Right ventricle myocardium inferior (tissue), 1 donor: ENCODE measurements at regions of chr17 and their contacts with region 1.

Region 1: DNA sequence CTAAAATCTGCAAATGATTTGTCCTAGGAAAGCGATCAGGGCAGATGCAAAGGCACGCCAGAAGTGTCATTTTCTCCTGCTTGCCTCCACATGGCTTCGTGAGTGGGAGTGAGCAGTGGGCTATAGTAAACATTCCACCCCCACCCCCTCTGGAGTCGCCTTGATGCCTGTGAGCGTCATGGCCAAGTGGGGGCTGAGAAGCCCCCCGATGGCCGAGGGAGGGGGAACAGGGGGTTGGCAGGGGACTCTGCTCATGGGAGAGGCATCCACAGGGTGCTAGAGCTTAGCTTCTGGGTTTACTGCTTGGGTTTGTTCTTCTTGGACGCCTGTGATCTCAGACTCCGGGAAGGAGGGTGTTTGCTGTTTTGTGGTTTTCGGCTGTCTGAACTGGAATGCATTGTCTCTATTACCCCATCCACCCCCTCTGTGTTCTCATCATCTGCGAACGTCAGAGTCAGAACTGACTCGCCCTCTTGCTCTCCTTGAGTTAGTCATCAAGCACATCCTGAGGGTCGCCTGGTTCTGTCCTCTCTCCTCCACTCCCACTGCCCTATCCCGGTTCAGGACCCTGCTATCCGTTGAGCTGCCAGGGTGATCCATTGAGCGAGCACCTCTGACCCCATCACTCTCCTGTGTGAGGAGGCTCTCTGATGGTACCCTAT is 15.4 kb downstream of the TNS4 start:
- DNase-seq: no peak
- ATAC-seq: peak; percentile 54

Region 2: GRCh38 chr17:40417609-40418427 is 68.2 kb before region 1 on chr17 and contains the start of gene TOP2A:
- intact Hi-C with region 1: no loop called
- DNase-seq: peak; percentile 92
- ATAC-seq: peak; percentile 99
- total RNA-seq, gene TOP2A: 3.0 TPM

Region 3: DNA sequence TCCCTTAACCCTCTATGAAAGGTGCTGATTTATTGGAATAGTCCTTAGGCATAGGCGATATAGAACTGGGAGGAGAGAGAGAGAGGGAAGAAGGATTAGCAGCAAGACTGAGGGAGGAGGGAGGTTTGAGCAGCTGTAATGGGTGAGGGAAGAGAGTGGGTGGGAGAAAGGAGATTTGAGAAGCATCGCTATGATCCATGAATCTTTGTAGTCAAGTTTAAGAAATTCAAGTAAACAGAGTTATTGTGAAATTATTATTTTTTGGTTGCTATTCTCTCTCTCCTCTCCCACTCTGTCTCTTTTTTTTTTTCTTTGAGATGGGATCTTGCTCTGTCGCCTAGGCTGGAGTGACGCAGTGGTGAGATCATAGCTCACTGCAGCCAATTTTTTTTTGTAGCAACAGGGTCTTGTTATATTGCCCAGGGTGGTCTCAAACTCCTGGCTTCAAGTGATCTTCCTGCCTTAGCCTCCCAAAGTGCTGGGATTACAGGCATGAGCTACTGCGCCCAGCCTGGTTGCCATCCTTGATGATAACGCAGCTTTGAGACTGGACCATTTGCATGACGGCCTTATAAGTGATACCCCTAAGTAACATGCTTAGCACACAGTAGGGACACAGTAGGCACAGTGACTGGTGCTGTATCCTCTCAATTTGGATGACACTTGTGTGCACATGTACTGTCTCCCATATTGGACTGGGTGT is 36.4 kb after region 1 on chr17:
- intact Hi-C with region 1: loop called (anchors 5 kb)
- DNase-seq: no peak
- ATAC-seq: no peak

Region 4: DNA sequence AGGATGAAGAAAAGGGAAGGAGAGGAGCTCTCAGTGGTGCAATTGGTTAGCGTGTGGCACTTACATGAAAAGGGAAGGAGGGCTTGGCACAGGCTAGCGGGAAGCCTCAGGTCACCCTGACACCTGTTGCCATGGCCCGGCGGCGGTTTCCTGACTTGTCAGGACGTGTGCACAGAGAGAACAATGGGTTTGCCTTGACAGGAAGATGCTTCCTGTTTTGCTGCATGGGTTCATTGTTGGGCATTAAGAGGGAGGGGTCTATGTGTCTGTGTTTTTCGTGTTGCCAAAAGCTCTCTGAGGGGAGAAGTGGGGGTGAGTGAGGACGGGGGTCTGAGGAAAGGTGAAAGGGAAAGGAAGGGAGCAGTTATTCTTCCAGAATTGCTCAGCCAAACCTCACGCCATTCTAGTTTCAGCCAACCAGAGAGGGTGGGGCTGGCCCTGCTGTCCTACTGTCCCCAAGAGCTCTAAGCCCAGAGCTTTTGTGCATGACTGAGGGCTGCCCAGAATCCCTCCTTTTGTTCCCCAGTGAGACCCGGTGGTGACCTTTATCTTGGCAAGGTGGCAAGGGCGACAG is 96.4 kb after region 1 on chr17:
- intact Hi-C with region 1: no loop called
- DNase-seq: peak; percentile 76
- ATAC-seq: peak; percentile 42

Region 5: DNA sequence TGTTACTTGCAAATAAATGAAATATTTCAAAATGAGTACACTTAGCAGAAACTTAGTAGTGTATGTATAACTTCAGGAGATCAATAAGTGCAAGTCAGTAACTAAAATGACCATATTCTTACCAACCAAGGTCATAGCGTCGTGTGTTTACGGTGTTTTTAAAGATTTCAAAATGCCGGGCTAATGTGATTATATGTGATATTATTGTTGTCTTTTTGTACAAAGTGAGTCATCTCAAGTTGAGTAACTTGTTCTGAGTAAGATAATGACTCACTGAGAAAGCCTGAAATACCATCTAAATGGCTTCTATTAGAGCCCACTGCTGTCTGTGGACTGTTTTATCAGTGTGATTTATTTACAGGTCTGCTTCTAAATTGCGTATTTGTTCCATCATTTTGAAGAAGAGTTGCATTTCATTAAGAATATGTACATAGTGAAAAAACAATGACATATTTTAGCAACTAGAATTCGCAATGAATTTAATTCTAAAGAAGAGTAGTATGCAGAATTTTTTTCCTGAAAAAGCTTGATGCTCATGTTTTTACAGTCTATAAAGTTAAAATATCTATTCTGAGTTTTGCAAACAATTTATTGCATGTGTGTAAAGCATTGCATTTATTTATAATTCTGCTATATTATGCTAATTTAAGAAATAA is 368.3 kb after region 1 on chr17:
- intact Hi-C with region 1: no loop called
- DNase-seq: no peak
- ATAC-seq: no peak